K562 (cell line): ENCODE measurements at regions of chr3 and their contacts with region 1.

Region 1: GRCh38 chr3:184656829-184657681 is 54.8 kb downstream of the MAGEF1 start:
- DNase-seq: no peak
- ATAC-seq: no peak
- H3K4me3 ChIP-seq: no peak overlapping the region
- H3K27ac ChIP-seq: no peak overlapping the region
- H3K4me1 ChIP-seq: peaks cover 0 to 5% of the 10 kb centered on the region in 2 experiments; a peak in 3 of 5 replicates
- H3K27me3 ChIP-seq: peaks cover 16 to 66% of the 10 kb centered on the region in 2 experiments; a peak in 3 of 5 replicates
- CTCF ChIP-seq: no peak
- EP300 ChIP-seq: no peak
- POLR2A ChIP-seq: no peak
- RAD21 ChIP-seq: no peak

Region 2: DNA sequence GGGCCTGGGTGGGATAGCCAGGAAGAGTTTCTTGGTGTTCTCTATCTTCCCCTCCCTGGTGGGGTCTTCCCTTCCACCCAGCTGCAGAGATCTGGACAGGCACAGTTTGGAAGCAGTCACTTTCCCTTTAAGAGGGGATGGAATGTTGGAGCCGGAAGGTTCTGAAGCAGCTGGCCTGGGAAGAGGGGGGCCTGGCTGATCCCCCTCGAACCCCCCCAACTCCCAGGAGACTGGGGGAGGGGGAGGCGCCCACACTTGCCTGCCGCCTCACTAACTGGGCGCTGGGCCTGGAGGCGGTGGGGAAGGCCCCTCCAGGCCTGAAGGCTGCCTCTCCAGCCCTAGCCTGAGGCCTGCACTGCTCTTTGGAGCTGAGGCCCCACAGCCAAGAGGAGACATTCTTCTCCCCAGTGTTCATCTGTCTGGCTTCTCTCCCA is 500.5 kb before region 1 on chr3:
- CTCF ChIA-PET with region 1: no interaction called
- POLR2A ChIA-PET with region 1: no interaction called
- in situ Hi-C with region 1: no loop called
- intact Hi-C with region 1: no loop called
- DNase-seq: peak in 3 of 4 experiments; percentile 30 to 49 (median 44)
- ATAC-seq: peak; percentile 49
- H3K4me3 ChIP-seq: peak overlapping the region; percentile 71
- H3K27ac ChIP-seq: peak overlapping the region; percentile 88
- H3K4me1 ChIP-seq: peaks cover 29 to 30% of the 10 kb centered on the region in 2 experiments; a peak in 4 of 5 replicates
- H3K27me3 ChIP-seq: no peaks in the 10 kb centered on the region
- CTCF ChIP-seq: no peak
- EP300 ChIP-seq: no peak
- POLR2A ChIP-seq: no peak
- RAD21 ChIP-seq: no peak

Region 3: DNA sequence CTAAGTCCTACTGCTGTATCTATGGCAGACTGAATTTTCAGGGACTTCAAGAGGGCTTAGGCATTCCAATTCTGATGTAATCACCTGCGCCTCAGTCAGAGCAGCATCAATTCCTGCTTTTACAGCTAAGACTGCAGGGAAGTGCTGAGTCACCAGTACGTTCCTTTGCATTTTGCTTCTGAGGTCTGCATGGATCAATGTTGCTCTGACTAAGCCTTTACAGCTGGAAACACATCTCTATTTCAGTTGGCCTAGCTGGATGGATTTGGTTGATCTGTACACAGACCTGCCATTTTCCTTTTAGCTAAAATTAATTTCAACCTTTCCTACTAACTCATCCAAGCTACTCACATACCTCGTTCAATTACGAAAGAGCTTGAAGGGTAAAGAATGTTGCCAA is 1400.5 kb after region 1 on chr3:
- CTCF ChIA-PET with region 1: no interaction called
- POLR2A ChIA-PET with region 1: no interaction called
- in situ Hi-C with region 1: loop called (anchors 25 kb)
- intact Hi-C with region 1: no loop called
- DNase-seq: peak in 2 of 4 experiments; percentile 13 to 44
- ATAC-seq: peak; percentile 76
- H3K4me3 ChIP-seq: no peak overlapping the region
- H3K27ac ChIP-seq: no peak overlapping the region
- H3K4me1 ChIP-seq: peaks cover 0 to 8% of the 10 kb centered on the region in 2 experiments; a peak in 2 of 5 replicates
- H3K27me3 ChIP-seq: no peaks in the 10 kb centered on the region
- CTCF ChIP-seq: no peak
- EP300 ChIP-seq: no peak
- POLR2A ChIP-seq: no peak
- RAD21 ChIP-seq: no peak